A673 (cell line): ENCODE measurements at regions of chr2 and their contacts with region 1.

Region 1: DNA sequence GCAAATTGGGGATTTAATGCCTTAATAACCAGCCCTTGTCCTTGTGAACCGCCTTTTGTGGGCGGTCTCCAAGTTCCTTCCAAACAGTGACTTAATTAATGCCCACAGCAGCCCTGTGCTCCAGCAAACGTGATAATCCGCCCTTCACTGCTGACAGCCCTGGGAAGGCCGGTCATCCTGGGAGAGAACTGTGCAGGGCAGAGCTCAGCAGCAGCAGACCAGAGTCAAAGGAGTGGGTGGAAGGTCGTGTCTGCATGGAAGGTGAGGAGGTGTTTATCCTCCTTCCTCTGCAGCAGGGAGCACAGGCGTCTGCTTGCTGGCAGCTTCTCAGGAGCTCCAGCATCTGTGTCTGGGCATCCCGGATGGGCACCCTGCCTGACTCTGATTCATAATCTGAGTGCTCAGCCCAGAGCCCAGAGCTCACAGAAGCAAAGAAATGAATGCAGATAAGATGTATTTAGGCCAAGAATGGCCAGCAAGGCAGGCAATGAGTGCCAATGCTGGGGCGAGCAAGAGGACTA is 270.0 kb upstream of the PXDN start:
- DNase-seq: no peak
- H3K4me3 ChIP-seq: no peak overlapping the region
- H3K27ac ChIP-seq: no peak overlapping the region
- H3K4me1 ChIP-seq: no peaks in the 10 kb centered on the region
- H3K27me3 ChIP-seq: no peaks in the 10 kb centered on the region
- CTCF ChIP-seq: no peak

Region 2: DNA sequence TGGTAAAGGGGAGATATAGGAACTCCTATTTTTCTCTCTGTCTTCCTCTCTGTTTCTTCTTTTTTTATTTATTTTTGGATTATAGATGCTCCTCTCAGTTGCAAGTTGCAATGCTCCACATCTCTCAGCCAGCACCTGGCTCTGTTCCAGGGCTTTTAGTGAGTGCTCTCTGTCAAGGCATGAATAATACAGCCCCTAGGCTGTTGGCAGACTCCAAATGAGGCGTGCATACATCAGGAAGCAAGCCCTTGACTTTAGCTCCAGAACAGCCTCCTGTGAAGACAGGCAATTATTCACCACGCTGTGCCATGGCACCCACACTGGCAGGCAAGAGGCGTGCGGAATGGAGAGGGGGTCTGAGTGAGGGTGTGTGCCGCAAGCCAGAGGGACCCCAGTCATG is 41.9 kb before region 1 on chr2:
- CTCF ChIA-PET with region 1: no interaction called
- POLR2A ChIA-PET with region 1: no interaction called
- intact Hi-C with region 1: loop called (anchors 1 kb)
- DNase-seq: peak; percentile 98
- H3K4me3 ChIP-seq: no peak overlapping the region
- H3K27ac ChIP-seq: peak overlapping the region; percentile 35
- H3K4me1 ChIP-seq: peaks cover 41% of the 10 kb centered on the region
- H3K27me3 ChIP-seq: no peaks in the 10 kb centered on the region
- CTCF ChIP-seq: no peak

Region 3: GRCh38 chr2:1986598-1986997 is 27.7 kb before region 1 on chr2:
- CTCF ChIA-PET with region 1: no interaction called
- POLR2A ChIA-PET with region 1: no interaction called
- intact Hi-C with region 1: no loop called
- DNase-seq: no peak
- H3K4me3 ChIP-seq: no peak overlapping the region
- H3K27ac ChIP-seq: no peak overlapping the region
- H3K4me1 ChIP-seq: peaks cover 11% of the 10 kb centered on the region
- H3K27me3 ChIP-seq: no peaks in the 10 kb centered on the region
- CTCF ChIP-seq: no peak

Region 4: DNA sequence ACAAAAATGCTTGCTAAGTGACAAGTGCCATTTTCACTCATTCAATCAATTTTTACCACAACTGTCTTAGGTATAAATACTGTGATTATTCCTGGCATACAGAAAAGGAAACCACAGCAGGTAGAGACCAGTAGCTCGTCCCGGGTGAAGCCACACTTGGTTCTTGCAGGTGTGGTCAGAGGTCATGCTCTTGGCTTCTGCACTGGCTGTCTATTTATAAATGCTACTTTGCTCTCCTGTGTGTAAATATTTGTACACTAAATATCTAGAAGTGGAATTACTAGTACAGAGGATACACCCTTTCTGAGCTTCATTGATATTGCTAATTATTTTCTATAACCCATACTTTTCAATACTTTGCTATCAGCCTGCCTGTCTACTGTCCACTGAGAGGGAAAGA is 32.2 kb after region 1 on chr2:
- CTCF ChIA-PET with region 1: no interaction called
- POLR2A ChIA-PET with region 1: no interaction called
- intact Hi-C with region 1: loop called (anchors 1 kb)
- DNase-seq: no peak
- H3K4me3 ChIP-seq: no peak overlapping the region
- H3K27ac ChIP-seq: no peak overlapping the region
- H3K4me1 ChIP-seq: no peaks in the 10 kb centered on the region
- H3K27me3 ChIP-seq: peaks cover 3% of the 10 kb centered on the region
- CTCF ChIP-seq: no peak

Region 5: GRCh38 chr2:2291500-2292260 is 277.4 kb after region 1 on chr2:
- CTCF ChIA-PET with region 1: no interaction called
- POLR2A ChIA-PET with region 1: no interaction called
- intact Hi-C with region 1: no loop called
- DNase-seq: no peak
- H3K4me3 ChIP-seq: no peak overlapping the region
- H3K27ac ChIP-seq: no peak overlapping the region
- H3K4me1 ChIP-seq: no peaks in the 10 kb centered on the region
- H3K27me3 ChIP-seq: no peaks in the 10 kb centered on the region
- CTCF ChIP-seq: peak; percentile 43